ENCODE measurements at regions of chr6 and their contacts with region 1.

Region 1: GRCh38 chr6:2999618-3000557 is at the start of gene NQO2:
- DNase-seq: peak; percentile 54 to 91
- H3K4me3 ChIP-seq: peak within 1 kb of the TSS; percentile 86
- H3K27ac ChIP-seq: peak within 1 kb of the TSS; percentile 54
- H3K4me1 ChIP-seq: peaks cover 16% of the 10 kb centered on the region
- H3K27me3 ChIP-seq: no peaks in the 10 kb centered on the region
- CTCF ChIP-seq: no peak
- total RNA-seq, gene NQO2: 79.4 and 82.9 TPM in 2 replicates

Region 2: DNA sequence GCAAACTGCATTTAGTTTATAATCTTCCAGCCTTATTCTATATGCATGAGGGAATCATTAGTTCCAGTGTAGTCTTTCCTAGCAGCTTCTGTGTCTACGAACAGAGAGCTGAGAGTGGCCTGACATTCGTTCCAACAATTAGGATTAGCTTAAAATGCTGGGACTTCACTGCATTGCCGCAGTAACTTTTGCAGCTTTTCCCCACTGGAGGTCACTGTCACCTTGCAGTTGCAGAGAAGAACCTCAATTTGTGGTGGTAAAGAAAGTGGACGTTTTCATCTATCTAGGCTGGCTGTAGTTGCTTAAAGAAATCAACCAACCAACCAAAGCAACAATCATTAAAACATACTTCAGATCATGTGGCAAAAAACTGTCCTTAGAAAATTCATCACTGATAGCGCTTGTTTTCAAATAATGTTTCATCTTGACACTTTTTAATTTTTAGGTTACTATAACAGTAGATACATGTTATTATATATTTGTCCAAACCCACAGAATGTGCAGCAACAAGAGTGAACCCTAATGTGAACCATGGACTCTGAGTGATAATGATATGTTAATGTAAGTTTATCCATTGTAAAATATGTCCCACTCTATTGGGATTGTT is 261.4 kb before region 1 on chr6:
- CTCF ChIA-PET with region 1: no interaction called
- POLR2A ChIA-PET with region 1: no interaction called
- intact Hi-C with region 1: loop called (anchors 2 kb)
- DNase-seq: peak; percentile 38 to 53
- H3K4me3 ChIP-seq: no peak overlapping the region
- H3K27ac ChIP-seq: no peak overlapping the region
- H3K4me1 ChIP-seq: no peaks in the 10 kb centered on the region
- H3K27me3 ChIP-seq: no peaks in the 10 kb centered on the region
- CTCF ChIP-seq: peak; percentile 72

Region 3: GRCh38 chr6:2988426-2989331 is 11.2 kb before region 1 on chr6:
- CTCF ChIA-PET with region 1: interaction called, 9 read pairs
- POLR2A ChIA-PET with region 1: interaction called, 19 read pairs
- intact Hi-C with region 1: no loop called
- DNase-seq: peak; percentile 87 to 91
- H3K4me3 ChIP-seq: peak overlapping the region; percentile 83
- H3K27ac ChIP-seq: peak overlapping the region; percentile 99
- H3K4me1 ChIP-seq: peaks cover 49% of the 10 kb centered on the region
- H3K27me3 ChIP-seq: no peaks in the 10 kb centered on the region
- CTCF ChIP-seq: peak; percentile 74

Region 4: GRCh38 chr6:3031857-3032640 is 32.2 kb after region 1 on chr6:
- CTCF ChIA-PET with region 1: interaction called, 11 read pairs
- POLR2A ChIA-PET with region 1: no interaction called
- intact Hi-C with region 1: no loop called
- DNase-seq: no peak
- H3K4me3 ChIP-seq: no peak overlapping the region
- H3K27ac ChIP-seq: no peak overlapping the region
- H3K4me1 ChIP-seq: no peaks in the 10 kb centered on the region
- H3K27me3 ChIP-seq: no peaks in the 10 kb centered on the region
- CTCF ChIP-seq: no peak

Region 5: GRCh38 chr6:3118353-3119039 is 118.6 kb after region 1 on chr6 and contains the start of gene BPHL:
- CTCF ChIA-PET with region 1: interaction called, 11 read pairs
- POLR2A ChIA-PET with region 1: no interaction called
- intact Hi-C with region 1: no loop called
- DNase-seq: peak; percentile 71 to 98
- H3K4me3 ChIP-seq: peak within 1 kb of the TSS; percentile 84
- H3K27ac ChIP-seq: peak within 1 kb of the TSS; percentile 97
- H3K4me1 ChIP-seq: peaks cover 22% of the 10 kb centered on the region
- H3K27me3 ChIP-seq: no peaks in the 10 kb centered on the region
- CTCF ChIP-seq: no peak
- total RNA-seq, gene BPHL: 23.7 and 24.5 TPM in 2 replicates

Region 6: GRCh38 chr6:3732345-3733141 is 732.7 kb after region 1 on chr6:
- CTCF ChIA-PET with region 1: no interaction called
- POLR2A ChIA-PET with region 1: no interaction called
- intact Hi-C with region 1: loop called (anchors 5 kb)
- DNase-seq: peak; percentile 55 to 72
- H3K4me3 ChIP-seq: no peak overlapping the region
- H3K27ac ChIP-seq: no peak overlapping the region
- H3K4me1 ChIP-seq: no peaks in the 10 kb centered on the region
- H3K27me3 ChIP-seq: no peaks in the 10 kb centered on the region
- CTCF ChIP-seq: peak; percentile 86

Measured in PC-9 (cell line).